ENCODE measurements at regions of chr5 and their contacts with region 1.

Region 1: DNA sequence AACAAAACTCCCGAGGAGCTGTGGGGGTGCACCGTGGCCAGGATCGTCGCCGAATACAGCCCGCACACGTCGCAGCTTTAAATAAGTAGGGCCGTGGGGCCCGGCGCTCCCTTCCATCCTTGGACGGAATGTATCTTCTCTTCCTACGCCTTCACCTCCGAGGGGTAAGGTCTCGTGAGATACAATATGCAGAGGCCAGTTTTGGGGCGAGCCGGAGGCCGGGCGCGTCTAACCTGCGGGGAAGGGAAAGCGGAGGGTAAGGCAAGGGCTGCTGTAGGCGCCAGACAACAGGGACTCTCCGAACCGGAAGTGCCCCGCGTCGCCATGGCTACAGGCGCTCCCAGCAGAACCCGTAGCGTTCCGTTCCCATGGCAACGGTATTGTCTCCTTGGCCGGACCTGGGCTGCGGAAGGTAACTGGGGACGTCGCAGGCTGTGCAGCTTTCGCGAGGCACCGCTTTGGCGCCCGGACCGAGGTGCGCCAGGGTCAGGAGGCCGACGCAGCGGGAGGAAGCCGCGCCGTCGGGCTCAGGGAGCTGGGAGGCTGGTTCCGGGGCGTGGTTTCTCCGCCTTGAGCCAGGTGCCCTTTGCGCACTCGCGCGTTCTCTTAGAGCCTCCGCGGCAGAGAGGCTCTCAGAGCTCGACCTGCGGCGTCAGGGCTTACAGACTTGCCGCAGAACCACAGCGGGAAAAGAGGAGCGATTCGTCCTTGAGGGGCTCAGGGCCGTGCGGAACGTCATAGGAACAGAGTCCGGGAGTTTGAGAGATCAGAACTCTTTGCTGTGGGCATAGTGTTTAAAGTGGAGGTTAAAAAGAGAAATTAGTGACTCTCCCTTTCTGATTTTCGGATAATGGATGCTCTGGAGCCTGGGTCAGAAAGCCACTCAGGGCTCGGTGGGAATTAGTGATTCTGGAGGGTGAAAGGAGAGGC is at the start of gene TTC23L:
- DNase-seq: peak; percentile 40 to 56
- ATAC-seq: peak; percentile 73 to 86
- H3K4me3 ChIP-seq: peak within 1 kb of the TSS; percentile 60 to 71 (median 71)
- H3K27ac ChIP-seq: no peak within 1 kb of the TSS
- H3K4me1 ChIP-seq: peaks cover 0 to 2% of the 10 kb centered on the region in 2 donors
- H3K27me3 ChIP-seq: peaks cover 0 to 5% (median 0%) of the 10 kb centered on the region in 3 donors
- CTCF ChIP-seq: no peak
- POLR2A ChIP-seq: no peak
- total RNA-seq, gene TTC23L: not detected

Region 2: GRCh38 chr5:34656001-34656699 is 182.9 kb before region 1 on chr5 and contains the start of gene RAI14:
- in situ Hi-C with region 1: no loop called
- intact Hi-C with region 1: loop called (anchors 5 kb)
- DNase-seq: peak; percentile 19 to 28
- ATAC-seq: peak; percentile 51 to 61
- H3K4me3 ChIP-seq: peak within 1 kb of the TSS; percentile 62 to 77 (median 66)
- H3K27ac ChIP-seq: peak within 1 kb of the TSS; percentile 63 to 75 (median 73)
- H3K4me1 ChIP-seq: peaks cover 11 to 12% of the 10 kb centered on the region in 2 donors
- H3K27me3 ChIP-seq: peaks cover 11 to 21% (median 15%) of the 10 kb centered on the region in 3 donors
- CTCF ChIP-seq: no peak
- POLR2A ChIP-seq: peak; percentile 23 to 30
- total RNA-seq, gene RAI14: 1.1 to 3.6 (median 1.7) TPM

Measured in gastrocnemius medialis (tissue), 4 donors.